ENCODE measurements at regions of chr6 and their contacts with region 1.

Region 1: DNA sequence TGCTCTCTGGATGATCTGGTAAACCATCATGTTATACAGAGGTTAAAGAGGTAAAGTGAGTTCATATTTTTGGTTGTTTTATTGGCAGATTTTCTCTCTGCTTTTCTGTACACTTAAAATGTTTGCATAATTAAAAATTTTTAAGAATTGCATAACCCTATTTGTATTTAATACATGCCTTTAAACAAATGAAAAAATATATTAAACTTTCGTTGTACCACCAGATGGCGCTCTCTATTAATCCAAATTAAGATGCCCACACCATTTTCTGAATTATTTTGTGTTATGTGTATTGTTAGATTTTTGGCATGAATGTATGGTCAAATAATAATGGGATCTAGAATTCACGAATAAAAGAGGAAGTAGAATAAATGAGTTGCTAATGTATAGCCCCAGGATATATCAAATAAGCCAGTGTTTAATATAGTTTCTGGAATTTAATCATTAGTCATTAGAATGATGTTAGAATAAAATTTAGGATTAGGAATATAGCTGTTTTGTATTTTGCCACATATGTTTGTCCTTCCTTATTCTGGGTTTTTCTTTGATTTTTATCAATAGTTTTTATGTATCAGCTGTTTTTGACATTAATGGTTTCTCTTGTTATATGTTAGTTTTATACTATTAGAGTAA is 38.9 kb downstream of the SMAP1 start:
- DNase-seq: no peak
- ATAC-seq: peak; percentile 43
- H3K4me3 ChIP-seq: no peak overlapping the region
- H3K27ac ChIP-seq: no peak overlapping the region
- H3K4me1 ChIP-seq: peaks cover 6% of the 10 kb centered on the region; the same call in 1 of the 2 replicates
- H3K27me3 ChIP-seq: no peaks in the 10 kb centered on the region
- CTCF ChIP-seq: peak; percentile 13 to 55 (median 44); a peak in 4 of 6 replicates
- EP300 ChIP-seq: no peak
- POLR2A ChIP-seq: no peak
- RAD21 ChIP-seq: peak; percentile 74

Region 2: DNA sequence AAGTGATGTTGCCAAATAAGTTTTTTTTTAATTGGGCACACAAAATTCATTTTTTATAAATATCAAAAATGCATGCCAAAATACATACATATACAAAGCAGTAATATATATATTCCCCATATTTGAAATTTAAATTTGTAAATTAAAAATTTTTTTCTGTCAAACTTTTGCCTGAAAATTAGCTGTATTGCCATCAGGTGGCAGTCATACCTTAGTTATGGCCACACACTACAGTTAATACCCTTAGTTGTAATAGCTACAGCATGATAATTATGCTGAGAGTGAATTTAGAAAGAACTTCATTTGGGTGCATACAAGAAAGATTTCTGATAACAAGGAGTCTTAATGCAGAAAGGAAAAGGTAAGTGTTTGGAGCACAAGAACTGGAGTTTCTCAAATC is 186.0 kb before region 1 on chr6:
- CTCF ChIA-PET with region 1: interaction called, 11 read pairs
- POLR2A ChIA-PET with region 1: no interaction called
- RAD21 ChIA-PET with region 1: interaction called, 19 read pairs
- SMC1A ChIA-PET with region 1: interaction called, 9 read pairs
- in situ Hi-C with region 1: no loop called
- intact Hi-C with region 1: no loop called
- DNase-seq: no peak
- ATAC-seq: peak; percentile 65
- H3K4me3 ChIP-seq: no peak overlapping the region
- H3K27ac ChIP-seq: no peak overlapping the region
- H3K4me1 ChIP-seq: no peaks in the 10 kb centered on the region
- H3K27me3 ChIP-seq: no peaks in the 10 kb centered on the region
- CTCF ChIP-seq: peak; percentile 30 to 61 (median 34); a peak in 4 of 6 replicates
- EP300 ChIP-seq: no peak
- POLR2A ChIP-seq: no peak
- RAD21 ChIP-seq: peak; percentile 85

Region 3: DNA sequence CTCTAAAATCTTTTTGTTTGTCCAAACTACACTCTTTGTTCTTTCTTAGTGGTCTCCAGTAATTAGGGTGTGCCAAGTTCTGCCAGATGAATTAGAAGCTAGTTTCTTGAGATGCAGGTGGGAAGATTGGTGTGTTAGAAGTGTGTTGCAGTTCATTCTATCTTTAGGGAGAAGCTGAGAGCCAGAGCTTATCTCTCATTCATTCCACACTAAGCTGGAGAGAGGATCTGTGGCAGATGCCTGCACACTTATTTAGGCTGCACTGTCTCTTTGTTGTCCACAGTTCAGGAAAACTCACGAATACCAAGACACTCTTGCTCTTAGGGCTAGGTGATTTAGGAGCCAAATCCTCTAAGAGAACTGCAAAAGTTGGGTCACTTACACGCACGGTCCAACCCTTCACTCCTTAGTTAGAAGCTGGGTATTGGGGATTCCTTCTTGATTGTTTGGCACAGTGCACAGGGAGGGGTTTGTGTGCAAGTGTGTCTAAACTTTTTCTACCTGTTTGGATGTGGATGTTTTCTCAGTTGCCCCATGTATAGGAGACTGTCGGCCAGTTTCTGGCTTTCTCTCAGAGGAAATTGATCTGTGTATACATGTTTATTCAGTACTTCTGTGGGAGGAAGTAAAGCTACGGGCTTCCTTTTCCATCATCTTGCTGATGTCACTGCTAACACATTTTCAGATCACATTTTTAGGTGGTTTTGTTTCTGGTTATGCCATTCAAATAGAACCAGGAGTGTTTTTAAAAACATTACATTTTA is 10.6 kb after region 1 on chr6:
- CTCF ChIA-PET with region 1: interaction called, 8 read pairs
- POLR2A ChIA-PET with region 1: interaction called, 4 read pairs
- RAD21 ChIA-PET with region 1: interaction called, 3 read pairs
- SMC1A ChIA-PET with region 1: interaction called, 10 read pairs
- in situ Hi-C with region 1: no loop called
- intact Hi-C with region 1: no loop called
- DNase-seq: no peak
- ATAC-seq: peak; percentile 85
- H3K4me3 ChIP-seq: no peak overlapping the region
- H3K27ac ChIP-seq: no peak overlapping the region
- H3K4me1 ChIP-seq: peaks cover 13% of the 10 kb centered on the region; the same call in 1 of the 2 replicates
- H3K27me3 ChIP-seq: no peaks in the 10 kb centered on the region
- CTCF ChIP-seq: no peak
- EP300 ChIP-seq: no peak
- POLR2A ChIP-seq: no peak
- RAD21 ChIP-seq: no peak

Region 4: DNA sequence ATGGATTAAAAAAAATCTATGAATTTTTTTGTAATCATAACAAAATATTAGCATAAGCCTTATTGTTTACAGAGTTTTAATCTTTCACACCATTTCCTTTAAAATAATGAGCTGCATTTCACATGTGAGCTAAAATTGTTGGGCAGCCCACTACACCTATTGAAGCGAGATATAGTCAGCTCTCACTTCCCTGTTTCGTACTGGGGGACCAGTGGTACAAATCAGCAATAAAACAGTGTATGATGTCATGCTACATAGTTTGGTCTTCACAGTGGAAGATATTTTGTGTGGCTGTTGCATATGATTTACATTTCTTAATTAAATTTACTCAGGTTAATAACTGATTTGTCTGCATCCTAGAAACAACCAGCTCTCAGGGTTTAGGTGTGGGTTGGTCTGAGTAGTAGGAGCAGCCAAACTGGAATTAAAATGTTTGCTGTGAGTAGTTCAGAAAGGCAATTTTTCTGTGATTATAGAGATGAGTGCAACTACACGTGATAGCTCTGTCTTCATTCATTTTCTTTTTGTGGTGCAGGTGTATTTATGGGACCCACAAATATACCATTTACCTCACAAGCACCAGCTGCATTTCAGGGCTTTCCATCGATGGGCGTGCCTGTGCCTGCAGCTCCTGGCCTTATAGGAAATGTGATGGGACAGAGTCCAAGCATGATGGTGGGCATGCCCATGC is 150.9 kb after region 1 on chr6:
- CTCF ChIA-PET with region 1: interaction called, 21 read pairs
- POLR2A ChIA-PET with region 1: interaction called, 7 read pairs
- RAD21 ChIA-PET with region 1: interaction called, 27 read pairs
- SMC1A ChIA-PET with region 1: interaction called, 61 read pairs
- in situ Hi-C with region 1: no loop called
- intact Hi-C with region 1: no loop called
- DNase-seq: peak; percentile 66
- ATAC-seq: peak; percentile 100
- H3K4me3 ChIP-seq: no peak overlapping the region
- H3K27ac ChIP-seq: no peak overlapping the region
- H3K4me1 ChIP-seq: peaks cover 7% of the 10 kb centered on the region
- H3K27me3 ChIP-seq: no peaks in the 10 kb centered on the region
- CTCF ChIP-seq: no peak
- EP300 ChIP-seq: peak; percentile 70 to 87; a peak in 3 of 4 replicates
- POLR2A ChIP-seq: no peak
- RAD21 ChIP-seq: no peak

Region 5: DNA sequence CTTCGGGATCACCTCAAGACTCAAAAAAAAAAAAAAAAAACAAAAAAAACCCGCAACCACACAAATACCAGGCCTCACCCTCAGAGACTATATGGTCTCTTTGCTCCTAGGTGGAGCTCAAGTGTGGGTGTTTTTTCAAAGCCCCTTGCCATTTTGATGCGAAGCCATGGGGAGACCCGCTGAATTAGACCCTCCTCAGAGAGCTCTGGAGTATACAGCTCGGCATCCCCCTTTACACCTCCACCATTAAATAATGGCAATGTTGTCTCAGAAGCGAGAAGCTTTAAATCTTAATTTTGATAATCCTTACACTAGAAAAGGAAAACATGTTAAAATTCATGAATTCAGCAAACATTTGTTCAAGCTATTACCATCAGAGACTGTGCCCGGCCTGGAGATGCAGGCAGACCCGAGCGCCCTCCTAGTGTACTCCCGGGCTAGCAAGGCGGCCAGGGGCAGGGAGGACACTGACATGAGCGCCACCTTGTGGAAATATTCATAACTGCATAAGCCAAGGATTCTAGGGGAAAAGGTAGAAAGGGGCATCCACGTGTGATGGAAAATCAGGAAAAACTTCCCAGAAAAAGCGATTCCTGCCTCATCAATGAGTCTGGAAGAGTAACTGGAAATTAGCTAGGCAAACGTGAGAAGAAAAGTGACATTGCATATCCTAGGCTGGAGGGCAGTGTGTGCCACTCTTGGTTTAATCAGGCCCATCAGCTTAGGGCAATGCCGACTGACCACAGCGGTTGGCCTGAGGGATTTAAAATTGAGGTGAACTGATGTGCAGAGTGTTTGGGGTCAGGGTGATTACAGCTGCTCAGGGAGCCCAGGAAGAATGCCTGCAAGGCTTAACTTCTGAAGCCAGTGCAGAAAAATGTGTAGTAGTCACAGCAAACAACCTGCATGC is 177.7 kb after region 1 on chr6:
- CTCF ChIA-PET with region 1: interaction called, 225 read pairs
- POLR2A ChIA-PET with region 1: interaction called, 7 read pairs
- RAD21 ChIA-PET with region 1: interaction called, 101 read pairs
- SMC1A ChIA-PET with region 1: interaction called, 155 read pairs
- in situ Hi-C with region 1: loop called (anchors 5 kb)
- intact Hi-C with region 1: loop called (anchors 1 kb)
- DNase-seq: peak; percentile 19
- ATAC-seq: peak; percentile 94
- H3K4me3 ChIP-seq: no peak overlapping the region
- H3K27ac ChIP-seq: no peak overlapping the region
- H3K4me1 ChIP-seq: no peaks in the 10 kb centered on the region
- H3K27me3 ChIP-seq: no peaks in the 10 kb centered on the region
- CTCF ChIP-seq: peak; percentile 75 to 89 (median 87); a peak in 4 of 6 replicates
- EP300 ChIP-seq: no peak
- POLR2A ChIP-seq: no peak
- RAD21 ChIP-seq: peak; percentile 97

Region 6: GRCh38 chr6:70955441-70956190 is 249.0 kb after region 1 on chr6:
- CTCF ChIA-PET with region 1: interaction called, 26 read pairs
- POLR2A ChIA-PET with region 1: no interaction called
- RAD21 ChIA-PET with region 1: interaction called, 29 read pairs
- SMC1A ChIA-PET with region 1: interaction called, 17 read pairs
- in situ Hi-C with region 1: loop called (anchors 5 kb)
- intact Hi-C with region 1: loop called (anchors 1 kb)
- DNase-seq: peak; percentile 11
- ATAC-seq: peak; percentile 99
- H3K4me3 ChIP-seq: peak overlapping the region; percentile 74; the same call in 1 of the 2 replicates
- H3K27ac ChIP-seq: no peak overlapping the region
- H3K4me1 ChIP-seq: peaks cover 3% of the 10 kb centered on the region; the same call in 1 of the 2 replicates
- H3K27me3 ChIP-seq: peaks cover 9 to 13% of the 10 kb centered on the region in 2 experiments
- CTCF ChIP-seq: peak; percentile 86 to 89 (median 86)
- EP300 ChIP-seq: no peak
- POLR2A ChIP-seq: no peak
- RAD21 ChIP-seq: peak; percentile 67

Region 7: GRCh38 chr6:71091173-71091572 is 384.6 kb after region 1 on chr6:
- CTCF ChIA-PET with region 1: no interaction called
- POLR2A ChIA-PET with region 1: no interaction called
- RAD21 ChIA-PET with region 1: no interaction called
- SMC1A ChIA-PET with region 1: no interaction called
- in situ Hi-C with region 1: no loop called
- intact Hi-C with region 1: no loop called
- DNase-seq: no peak
- ATAC-seq: no peak
- H3K4me3 ChIP-seq: no peak overlapping the region
- H3K27ac ChIP-seq: no peak overlapping the region
- H3K4me1 ChIP-seq: no peaks in the 10 kb centered on the region
- H3K27me3 ChIP-seq: no peaks in the 10 kb centered on the region
- CTCF ChIP-seq: no peak
- EP300 ChIP-seq: no peak
- POLR2A ChIP-seq: no peak
- RAD21 ChIP-seq: no peak

Measured in GM12878 (cell line).